Sigmoid colon (tissue), 7 donors: ENCODE measurements at regions of chr2 and their contacts with region 1.

Region 1: GRCh38 chr2:147937744-147938349 is 82.7 kb downstream of the ORC4 start:
- DNase-seq: no peak
- H3K4me3 ChIP-seq: no peak overlapping the region
- H3K27ac ChIP-seq: no peak overlapping the region
- H3K4me1 ChIP-seq: peaks cover 0 to 6% (median 3%) of the 10 kb centered on the region in 4 donors
- H3K27me3 ChIP-seq: no peaks in the 10 kb centered on the region
- CTCF ChIP-seq: peak; percentile 60 to 85 (median 70)
- EP300 ChIP-seq: no peak
- POLR2A ChIP-seq: no peak

Region 2: DNA sequence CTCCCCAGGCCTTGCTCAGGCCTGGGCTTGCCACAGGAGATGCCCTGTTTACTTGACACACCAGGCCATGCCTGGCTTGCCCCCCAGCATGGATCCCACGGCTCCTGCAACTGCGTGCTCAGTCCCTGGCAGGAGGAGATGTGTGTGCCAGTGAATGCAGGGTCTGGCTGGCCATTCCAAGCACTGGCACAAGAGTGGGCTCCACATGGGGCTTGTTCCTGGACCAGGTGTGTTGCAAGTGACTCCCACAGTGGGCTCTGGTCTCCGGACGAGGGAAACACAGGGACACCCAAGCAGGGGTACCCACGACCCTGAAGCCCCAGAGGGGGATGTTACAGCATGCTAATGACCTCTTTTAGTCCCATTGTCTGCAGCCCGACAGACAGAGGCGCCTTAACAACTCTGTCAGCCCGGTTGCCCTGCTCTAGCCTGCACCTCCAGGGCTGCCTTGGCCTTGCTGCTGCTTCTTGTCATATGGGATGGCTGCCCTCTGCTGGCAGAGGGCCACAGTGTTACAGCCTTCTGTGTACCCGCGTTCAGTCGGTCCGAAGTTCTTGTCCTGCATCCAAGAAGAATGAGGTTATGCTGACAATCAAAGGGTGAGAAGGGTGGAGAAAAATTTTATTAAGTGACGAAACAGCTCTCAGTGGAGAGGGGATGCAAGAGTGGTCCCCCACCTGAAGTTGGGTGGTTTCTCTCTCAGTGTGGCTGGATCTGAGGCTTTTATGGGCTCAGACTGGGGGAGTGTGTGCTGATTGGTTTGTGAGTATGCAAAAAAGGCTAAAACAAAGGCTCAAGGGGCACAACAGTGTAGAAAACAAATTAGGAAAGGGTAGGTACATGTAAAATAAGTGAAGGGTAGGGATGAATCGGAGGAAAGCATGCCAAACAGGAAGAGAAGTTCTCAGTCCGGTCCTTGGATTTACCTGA is 263.5 kb after region 1 on chr2:
- intact Hi-C with region 1: loop called (anchors 5 kb)
- DNase-seq: peak; percentile 87
- H3K4me3 ChIP-seq: no peak overlapping the region
- H3K27ac ChIP-seq: no peak overlapping the region
- H3K4me1 ChIP-seq: no peaks in the 10 kb centered on the region
- H3K27me3 ChIP-seq: no peaks in the 10 kb centered on the region
- CTCF ChIP-seq: peak in 2 of 4 experiments; percentile 55 to 62
- EP300 ChIP-seq: no peak
- POLR2A ChIP-seq: no peak

Region 3: DNA sequence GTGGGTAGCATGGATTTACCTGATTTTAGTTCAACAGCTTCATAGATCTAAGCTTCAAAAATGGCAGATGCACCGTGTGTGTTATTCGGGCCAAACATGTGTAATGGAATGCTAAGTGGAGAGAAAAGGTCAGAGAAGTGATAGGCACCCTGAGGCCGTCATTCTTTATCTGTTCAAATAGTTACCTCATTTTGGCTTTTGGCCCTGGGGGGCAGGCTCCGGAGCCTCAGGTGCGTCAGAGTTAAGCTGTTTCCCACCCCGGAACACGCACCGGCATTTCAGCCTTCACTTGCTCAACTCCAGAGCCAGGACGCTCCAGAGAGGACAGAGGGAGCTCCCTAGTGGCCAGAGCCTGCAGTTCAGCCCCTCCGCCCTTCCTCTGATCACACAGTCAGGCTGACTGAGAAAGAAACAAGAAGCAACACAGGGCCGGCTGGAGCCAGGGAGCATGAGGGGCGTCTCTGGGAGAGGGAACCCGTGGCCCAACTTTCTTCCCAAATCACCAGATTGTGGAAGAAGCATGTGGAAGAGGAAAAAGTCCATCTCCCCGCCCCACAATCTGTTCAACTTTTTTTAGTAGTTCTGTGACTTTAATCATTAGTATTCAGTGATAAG is 571.5 kb after region 1 on chr2:
- intact Hi-C with region 1: loop called (anchors 5 kb)
- DNase-seq: peak; percentile 86
- H3K4me3 ChIP-seq: peak overlapping the region; percentile 1 to 26 (median 22)
- H3K27ac ChIP-seq: no peak overlapping the region
- H3K4me1 ChIP-seq: peaks cover 0 to 7% (median 5%) of the 10 kb centered on the region in 4 donors
- H3K27me3 ChIP-seq: no peaks in the 10 kb centered on the region
- CTCF ChIP-seq: peak in 3 of 4 experiments; percentile 70 to 83 (median 73)
- EP300 ChIP-seq: no peak
- POLR2A ChIP-seq: no peak

Region 4: GRCh38 chr2:148989882-148990493 is 1052.1 kb after region 1 on chr2:
- intact Hi-C with region 1: loop called (anchors 5 kb)
- DNase-seq: no peak
- H3K4me3 ChIP-seq: no peak overlapping the region
- H3K27ac ChIP-seq: no peak overlapping the region
- H3K4me1 ChIP-seq: no peaks in the 10 kb centered on the region
- H3K27me3 ChIP-seq: no peaks in the 10 kb centered on the region
- CTCF ChIP-seq: peak in 3 of 4 experiments; percentile 69 to 80 (median 78)
- EP300 ChIP-seq: no peak
- POLR2A ChIP-seq: no peak